B cell (primary cell): ENCODE measurements at regions of chr14 and their contacts with region 1.

Region 1: DNA sequence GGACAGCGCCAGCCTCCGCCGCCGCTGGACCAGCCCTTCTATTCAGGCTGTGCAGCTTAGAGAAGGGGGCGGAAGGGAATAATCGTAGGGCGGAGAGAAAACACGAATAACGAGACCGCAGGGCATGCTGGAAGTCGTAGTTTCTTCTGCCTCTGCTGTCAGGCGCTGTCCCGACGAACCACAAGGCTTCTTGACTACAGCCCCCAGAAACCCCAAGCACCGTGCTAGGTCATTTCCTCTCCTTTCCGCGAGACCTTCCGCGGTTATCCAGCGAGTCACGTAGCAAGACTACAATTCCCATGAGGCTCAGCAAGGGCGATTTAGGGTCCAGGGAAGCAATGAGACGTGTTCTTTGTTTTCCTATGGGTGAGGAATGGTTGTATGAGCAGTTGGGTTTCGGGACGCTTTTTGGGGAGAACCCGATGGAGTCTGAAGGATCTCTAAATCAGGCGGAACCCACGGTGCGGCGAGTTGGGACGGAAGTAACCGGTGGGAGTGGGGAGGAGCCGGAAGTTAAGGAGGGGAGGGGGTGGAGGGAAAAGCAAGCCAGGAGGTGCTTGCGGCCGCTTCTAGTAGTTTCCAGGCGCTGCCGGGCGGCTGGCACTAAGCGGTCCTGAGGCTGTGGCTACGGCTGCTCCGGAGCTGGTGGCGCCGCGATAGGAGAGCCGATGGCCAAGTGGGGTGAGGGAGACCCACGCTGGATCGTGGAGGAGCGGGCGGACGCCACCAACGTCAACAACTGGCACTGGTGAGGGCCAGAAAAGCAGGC is at the starts of genes AHSA1 and VIPAS39:
- DNase-seq: peak; percentile 98
- ATAC-seq: peak; percentile 91
- H3K4me3 ChIP-seq: peak within 1 kb of the TSS; percentile 72 to 99 (median 93)
- H3K4me3 Mint-ChIP-seq: peak within 1 kb of the TSS; percentile 100
- H3K27ac ChIP-seq: peak within 1 kb of the TSS; percentile 80 to 91
- H3K27ac Mint-ChIP-seq: peak within 1 kb of the TSS; percentile 99
- H3K4me1 ChIP-seq: peaks cover 21 to 24% of the 10 kb centered on the region in 2 donors
- H3K4me1 Mint-ChIP-seq: peaks cover 39% of the 10 kb centered on the region
- H3K27me3 ChIP-seq: no peaks in the 10 kb centered on the region
- H3K27me3 Mint-ChIP-seq: no peaks in the 10 kb centered on the region
- CTCF ChIP-seq: no peak
- total RNA-seq, gene AHSA1: 87.5 and 112 TPM in 2 replicates
- total RNA-seq, gene VIPAS39: 25.3 and 25.9 TPM in 2 replicates

Region 2: DNA sequence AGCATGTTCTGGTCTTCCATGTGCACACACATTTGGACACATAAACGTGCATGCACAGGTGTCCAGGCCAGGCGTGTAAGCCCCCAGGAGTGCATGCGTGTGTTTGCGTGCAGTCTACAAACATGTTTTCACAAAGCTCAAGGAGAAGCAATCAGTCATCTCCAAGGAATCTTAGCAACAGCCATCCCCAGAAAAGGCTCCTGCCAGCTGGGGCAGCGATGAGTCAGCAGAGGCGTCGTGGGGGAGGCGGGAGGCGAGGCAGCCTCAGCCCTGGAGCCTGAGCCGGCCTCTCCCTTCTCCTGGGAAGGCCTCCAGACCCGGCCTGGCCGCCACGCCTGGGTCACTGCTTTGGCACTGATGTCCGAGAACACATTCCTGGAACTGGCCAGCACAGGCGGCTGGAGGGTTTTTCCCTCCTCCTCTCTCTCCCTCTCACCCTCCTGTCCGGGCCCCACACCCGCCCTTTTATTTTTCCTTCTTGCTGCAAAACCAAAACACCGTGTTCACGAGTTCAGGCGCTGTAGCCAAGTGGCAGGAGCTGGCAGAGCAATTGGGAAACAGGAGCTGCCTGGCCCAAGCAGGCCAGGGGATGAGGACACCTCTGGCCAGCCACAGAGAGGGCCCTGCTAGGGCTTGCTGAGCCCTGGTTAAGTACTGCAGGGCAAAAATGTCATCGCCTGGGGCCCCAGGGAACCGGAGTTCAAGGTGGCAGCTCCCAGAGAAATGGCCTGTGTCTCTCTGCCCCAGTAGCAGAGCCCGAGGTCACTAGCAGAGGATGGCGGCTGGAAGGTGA is 538.8 kb before region 1 on chr14:
- CTCF ChIA-PET with region 1: no interaction called
- POLR2A ChIA-PET with region 1: no interaction called
- intact Hi-C with region 1: no loop called
- DNase-seq: no peak
- ATAC-seq: no peak
- H3K4me3 ChIP-seq: no peak overlapping the region
- H3K4me3 Mint-ChIP-seq: no peak overlapping the region
- H3K27ac ChIP-seq: no peak overlapping the region
- H3K27ac Mint-ChIP-seq: no peak overlapping the region
- H3K4me1 ChIP-seq: peaks cover 24 to 25% of the 10 kb centered on the region in 2 donors
- H3K4me1 Mint-ChIP-seq: peaks cover 20% of the 10 kb centered on the region
- H3K27me3 ChIP-seq: peaks cover 0 to 33% (median 5%) of the 10 kb centered on the region in 4 experiments
- H3K27me3 Mint-ChIP-seq: peaks cover 22% of the 10 kb centered on the region
- CTCF ChIP-seq: no peak

Region 3: DNA sequence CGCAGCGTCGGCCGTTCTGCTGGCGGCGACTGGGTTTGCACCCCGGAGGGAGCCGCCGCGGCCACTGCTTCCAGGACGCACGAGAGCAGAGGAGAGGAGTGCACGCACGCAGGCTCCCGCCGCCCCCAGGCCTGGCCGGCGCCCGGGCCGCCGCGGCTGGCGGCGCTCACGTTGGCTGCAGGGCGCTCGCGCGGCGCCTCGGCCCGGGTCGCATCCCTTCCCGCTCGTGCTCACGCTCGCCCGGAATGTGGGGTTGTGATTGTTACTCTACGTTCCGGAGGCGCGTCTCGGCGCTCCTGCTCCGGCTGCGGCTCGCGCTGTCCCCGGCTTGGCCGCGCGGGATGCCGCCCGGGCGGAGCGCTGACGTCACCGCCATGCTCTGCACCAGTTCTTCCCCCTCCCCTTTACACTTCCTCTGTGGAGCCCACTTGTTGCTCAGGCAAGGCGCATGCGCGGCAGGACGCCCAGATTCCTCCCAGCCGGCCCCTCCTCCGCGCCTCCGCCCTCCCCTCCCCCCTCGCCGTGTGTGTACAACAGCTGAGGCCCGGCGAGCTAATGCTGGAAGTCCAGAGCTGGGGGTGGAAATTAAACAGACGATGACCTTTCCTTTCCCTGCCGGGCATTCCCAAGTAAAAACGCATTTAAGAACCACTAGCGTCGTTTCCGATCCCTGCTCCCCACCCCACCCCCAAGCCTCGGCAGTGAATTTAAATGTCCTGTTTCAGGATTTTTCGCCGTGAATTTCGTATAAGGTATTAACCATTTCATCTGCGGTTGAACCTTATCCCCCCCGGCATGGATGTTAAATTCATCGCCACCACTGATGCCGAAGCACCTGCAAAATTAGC is 429.1 kb before region 1 on chr14 and contains the start of gene IRF2BPL:
- CTCF ChIA-PET with region 1: no interaction called
- POLR2A ChIA-PET with region 1: no interaction called
- intact Hi-C with region 1: loop called (anchors 2 kb)
- DNase-seq: peak; percentile 97
- ATAC-seq: peak; percentile 70
- H3K4me3 ChIP-seq: peak within 1 kb of the TSS; percentile 11 to 95 (median 82)
- H3K4me3 Mint-ChIP-seq: peak within 1 kb of the TSS; percentile 92
- H3K27ac ChIP-seq: peak within 1 kb of the TSS; percentile 96 to 98
- H3K27ac Mint-ChIP-seq: peak within 1 kb of the TSS; percentile 99
- H3K4me1 ChIP-seq: peaks cover 39 to 47% of the 10 kb centered on the region in 2 donors
- H3K4me1 Mint-ChIP-seq: peaks cover 46% of the 10 kb centered on the region
- H3K27me3 ChIP-seq: no peaks in the 10 kb centered on the region
- H3K27me3 Mint-ChIP-seq: no peaks in the 10 kb centered on the region
- CTCF ChIP-seq: no peak
- total RNA-seq, gene IRF2BPL: 32.8 and 34.0 TPM in 2 replicates

Region 4: GRCh38 chr14:77320238-77320935 is 137.3 kb before region 1 on chr14 and contains the start of gene POMT2:
- CTCF ChIA-PET with region 1: interaction called, 20 read pairs
- POLR2A ChIA-PET with region 1: interaction called, 8 read pairs
- intact Hi-C with region 1: loop called (anchors 1 kb)
- DNase-seq: peak; percentile 96
- ATAC-seq: peak; percentile 56
- H3K4me3 ChIP-seq: peak within 1 kb of the TSS; percentile 59 to 99 (median 93)
- H3K4me3 Mint-ChIP-seq: peak within 1 kb of the TSS; percentile 100
- H3K27ac ChIP-seq: peak within 1 kb of the TSS; percentile 89 to 92
- H3K27ac Mint-ChIP-seq: peak within 1 kb of the TSS; percentile 100
- H3K4me1 ChIP-seq: peaks cover 10 to 16% of the 10 kb centered on the region in 2 donors
- H3K4me1 Mint-ChIP-seq: peaks cover 18% of the 10 kb centered on the region
- H3K27me3 ChIP-seq: no peaks in the 10 kb centered on the region
- H3K27me3 Mint-ChIP-seq: no peaks in the 10 kb centered on the region
- CTCF ChIP-seq: peak; percentile 43
- total RNA-seq, gene POMT2: 36.6 and 44.1 TPM in 2 replicates

Region 5: GRCh38 chr14:77426396-77426795 is 31.3 kb before region 1 on chr14:
- CTCF ChIA-PET with region 1: no interaction called
- POLR2A ChIA-PET with region 1: no interaction called
- intact Hi-C with region 1: no loop called
- DNase-seq: no peak
- ATAC-seq: no peak
- H3K4me3 ChIP-seq: no peak overlapping the region
- H3K4me3 Mint-ChIP-seq: no peak overlapping the region
- H3K27ac ChIP-seq: no peak overlapping the region
- H3K27ac Mint-ChIP-seq: no peak overlapping the region
- H3K4me1 ChIP-seq: no peaks in the 10 kb centered on the region
- H3K4me1 Mint-ChIP-seq: no peaks in the 10 kb centered on the region
- H3K27me3 ChIP-seq: no peaks in the 10 kb centered on the region
- H3K27me3 Mint-ChIP-seq: no peaks in the 10 kb centered on the region
- CTCF ChIP-seq: no peak

Region 6: GRCh38 chr14:77470192-77470870 is 12.6 kb after region 1 on chr14:
- CTCF ChIA-PET with region 1: no interaction called
- POLR2A ChIA-PET with region 1: no interaction called
- intact Hi-C with region 1: no loop called
- DNase-seq: no peak
- ATAC-seq: no peak
- H3K4me3 ChIP-seq: no peak overlapping the region
- H3K4me3 Mint-ChIP-seq: no peak overlapping the region
- H3K27ac ChIP-seq: no peak overlapping the region
- H3K27ac Mint-ChIP-seq: no peak overlapping the region
- H3K4me1 ChIP-seq: no peaks in the 10 kb centered on the region
- H3K4me1 Mint-ChIP-seq: no peaks in the 10 kb centered on the region
- H3K27me3 ChIP-seq: no peaks in the 10 kb centered on the region
- H3K27me3 Mint-ChIP-seq: no peaks in the 10 kb centered on the region
- CTCF ChIP-seq: no peak

Region 7: DNA sequence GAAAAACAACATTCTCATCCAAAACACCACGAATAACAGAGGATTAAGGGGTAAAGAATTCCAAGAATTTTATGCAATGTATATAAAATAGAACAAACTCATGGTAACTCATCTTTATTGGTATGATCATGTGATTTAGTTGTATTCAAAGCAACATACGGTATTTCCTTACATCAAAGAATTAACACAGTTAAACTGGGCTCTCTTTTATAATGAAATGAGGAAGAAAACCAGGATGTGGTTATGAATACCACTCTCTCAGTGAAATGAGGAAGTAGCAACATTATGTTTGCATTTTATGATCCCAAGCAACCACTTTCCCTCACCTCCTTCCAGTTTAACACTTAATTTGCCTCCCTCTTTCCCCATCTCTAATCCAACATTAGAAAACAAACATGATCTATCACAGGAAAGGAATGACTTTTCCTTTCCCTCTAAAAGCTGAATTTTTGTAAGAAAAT is 135.8 kb after region 1 on chr14:
- CTCF ChIA-PET with region 1: interaction called, 3 read pairs
- POLR2A ChIA-PET with region 1: no interaction called
- intact Hi-C with region 1: loop called (anchors 2 kb)
- DNase-seq: peak; percentile 83
- ATAC-seq: peak; percentile 77
- H3K4me3 ChIP-seq: peak overlapping the region; percentile 22 to 77 (median 41)
- H3K4me3 Mint-ChIP-seq: peak overlapping the region; percentile 86
- H3K27ac ChIP-seq: peak overlapping the region; percentile 91 to 95
- H3K27ac Mint-ChIP-seq: peak overlapping the region; percentile 95
- H3K4me1 ChIP-seq: peaks cover 86 to 87% of the 10 kb centered on the region in 2 donors
- H3K4me1 Mint-ChIP-seq: peaks cover 78% of the 10 kb centered on the region
- H3K27me3 ChIP-seq: no peaks in the 10 kb centered on the region
- H3K27me3 Mint-ChIP-seq: no peaks in the 10 kb centered on the region
- CTCF ChIP-seq: no peak

Region 8: GRCh38 chr14:77760381-77761246 is 302.9 kb after region 1 on chr14 and contains the start of gene SNW1:
- CTCF ChIA-PET with region 1: no interaction called
- POLR2A ChIA-PET with region 1: no interaction called
- intact Hi-C with region 1: loop called (anchors 1 kb)
- DNase-seq: peak; percentile 95
- ATAC-seq: peak; percentile 94
- H3K4me3 ChIP-seq: peak within 1 kb of the TSS; percentile 82 to 98 (median 92)
- H3K4me3 Mint-ChIP-seq: peak within 1 kb of the TSS; percentile 97
- H3K27ac ChIP-seq: peak within 1 kb of the TSS; percentile 97
- H3K27ac Mint-ChIP-seq: peak within 1 kb of the TSS; percentile 97
- H3K4me1 ChIP-seq: peaks cover 23 to 24% of the 10 kb centered on the region in 2 donors
- H3K4me1 Mint-ChIP-seq: peaks cover 36% of the 10 kb centered on the region
- H3K27me3 ChIP-seq: no peaks in the 10 kb centered on the region
- H3K27me3 Mint-ChIP-seq: no peaks in the 10 kb centered on the region
- CTCF ChIP-seq: no peak
- total RNA-seq, gene SNW1: 86.4 and 99.3 TPM in 2 replicates